Activated B cell treated with CpG ODN at 0.5 μM for 24 hours (primary cell): ENCODE measurements at regions of chr6 and their contacts with region 1.

Region 1: DNA sequence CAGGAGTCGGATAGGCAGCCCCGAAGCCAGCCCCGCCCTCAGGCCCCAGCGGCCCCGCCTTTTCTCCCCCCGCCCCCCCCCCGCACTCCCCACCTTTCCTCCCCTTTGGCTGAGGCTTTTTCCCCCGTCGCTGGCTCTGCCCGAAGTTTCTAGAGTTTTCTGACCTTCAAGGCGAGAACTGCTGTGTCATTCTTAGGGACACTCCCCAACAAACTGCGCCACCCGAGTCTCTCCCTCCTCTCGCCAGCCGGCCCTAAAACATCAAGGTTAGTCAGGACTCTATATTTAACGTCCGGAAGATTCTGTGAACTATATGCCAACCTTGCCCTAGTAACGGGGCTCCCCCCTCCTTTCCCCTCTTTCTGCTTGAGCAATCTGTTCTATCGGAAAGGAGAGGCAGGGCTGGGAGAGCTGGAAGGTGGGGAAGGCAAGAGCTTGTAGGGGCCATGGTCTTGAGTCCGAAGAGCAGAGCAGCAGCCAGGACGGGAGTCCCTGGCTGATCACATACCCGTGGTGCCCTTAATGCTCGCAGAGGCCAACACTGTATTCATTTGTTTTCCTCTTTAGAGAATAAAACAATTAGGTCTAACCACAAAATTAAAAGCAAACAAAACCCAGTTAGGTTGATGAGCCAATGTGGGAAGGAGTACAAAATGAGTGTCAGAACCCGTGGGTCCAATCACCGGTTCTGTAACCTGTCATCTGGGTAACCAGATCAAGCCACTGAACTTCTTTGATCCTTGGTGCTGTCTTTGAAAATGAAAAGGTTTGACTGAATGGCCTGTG is 5.3 kb upstream of the HSPA1B start:
- DNase-seq: no peak
- ATAC-seq: peak; percentile 57
- H3K4me3 Mint-ChIP-seq: peak overlapping the region; percentile 92
- H3K27ac Mint-ChIP-seq: peak overlapping the region; percentile 97
- H3K4me1 Mint-ChIP-seq: peaks cover 45% of the 10 kb centered on the region
- H3K27me3 Mint-ChIP-seq: no peaks in the 10 kb centered on the region
- CTCF ChIP-seq: no peak

Region 2: GRCh38 chr6:31806465-31807272 is 15.6 kb before region 1 on chr6 and contains the start of gene LSM2:
- CTCF ChIA-PET with region 1: no interaction called
- POLR2A ChIA-PET with region 1: interaction called, 8 read pairs
- intact Hi-C with region 1: loop called (anchors 1 kb)
- DNase-seq: peak; percentile 89
- ATAC-seq: peak; percentile 98
- H3K4me3 Mint-ChIP-seq: peak within 1 kb of the TSS; percentile 94
- H3K27ac Mint-ChIP-seq: peak within 1 kb of the TSS; percentile 89
- H3K4me1 Mint-ChIP-seq: peaks cover 16% of the 10 kb centered on the region
- H3K27me3 Mint-ChIP-seq: no peaks in the 10 kb centered on the region
- CTCF ChIP-seq: no peak
- total RNA-seq, gene LSM2: 61.8 and 68.6 TPM in 2 replicates

Region 3: DNA sequence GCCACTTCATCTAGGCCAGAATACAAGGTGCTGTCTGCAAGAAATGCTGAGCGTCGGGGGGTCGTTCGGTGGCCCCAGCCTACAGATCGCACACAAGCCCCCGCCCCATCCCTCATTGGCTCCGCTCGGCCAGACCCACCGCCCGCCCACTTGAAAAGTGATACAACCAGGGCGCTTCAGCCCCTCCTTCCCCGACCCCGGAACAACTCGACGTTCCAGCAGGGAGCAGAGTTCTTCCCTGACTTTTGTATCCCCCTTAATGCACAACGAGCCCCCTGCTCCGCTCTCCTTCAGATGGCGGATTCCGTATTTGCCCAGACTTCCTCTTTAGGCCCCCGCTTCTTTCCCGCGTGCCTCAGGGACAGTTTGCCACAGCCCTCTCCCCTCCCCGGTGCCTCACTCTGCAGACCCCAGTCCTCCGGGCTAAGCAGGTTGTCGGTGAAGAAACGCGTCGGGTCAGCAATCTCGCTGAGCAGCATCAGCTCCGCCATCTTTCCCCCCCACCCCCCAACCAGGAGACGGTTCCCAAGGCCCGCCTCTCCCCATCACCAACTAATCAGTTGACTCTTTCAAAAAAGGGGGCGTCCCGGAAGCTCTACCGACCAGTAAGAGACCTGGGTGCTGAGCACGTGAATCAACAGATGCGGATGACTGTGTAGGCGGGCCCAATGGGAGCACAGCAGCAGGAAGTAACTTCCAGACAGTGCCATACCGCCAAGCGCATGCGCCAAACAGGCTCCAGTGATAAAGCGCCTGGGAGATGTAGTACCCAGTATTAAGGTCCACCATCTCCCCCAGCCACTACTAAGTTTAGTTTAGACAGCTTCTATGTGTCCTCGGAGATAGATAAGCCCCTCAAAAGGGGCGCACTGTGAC is 305.7 kb after region 1 on chr6 and contains the start of gene ATF6B:
- CTCF ChIA-PET with region 1: no interaction called
- POLR2A ChIA-PET with region 1: no interaction called
- intact Hi-C with region 1: no loop called
- DNase-seq: peak; percentile 81
- ATAC-seq: peak; percentile 92
- H3K4me3 Mint-ChIP-seq: peak within 1 kb of the TSS; percentile 99
- H3K27ac Mint-ChIP-seq: peak within 1 kb of the TSS; percentile 95
- H3K4me1 Mint-ChIP-seq: peaks cover 53% of the 10 kb centered on the region
- H3K27me3 Mint-ChIP-seq: no peaks in the 10 kb centered on the region
- CTCF ChIP-seq: no peak
- total RNA-seq, gene ATF6B: 144 and 148 TPM in 2 replicates